Endothelial cell of umbilical vein (primary cell): ENCODE measurements at regions of chr6 and their contacts with region 1.

Region 1: GRCh38 chr6:26285143-26286134 is 79.6 kb upstream of the BTN3A2 start:
- DNase-seq: peak; percentile 98
- H3K4me3 ChIP-seq: peak overlapping the region; percentile 5 to 68 (median 58)
- H3K27ac ChIP-seq: peak overlapping the region; percentile 68
- H3K4me1 ChIP-seq: no peaks in the 10 kb centered on the region
- H3K27me3 ChIP-seq: no peaks in the 10 kb centered on the region
- CTCF ChIP-seq: no peak
- POLR2A ChIP-seq: peak; percentile 99

Region 2: DNA sequence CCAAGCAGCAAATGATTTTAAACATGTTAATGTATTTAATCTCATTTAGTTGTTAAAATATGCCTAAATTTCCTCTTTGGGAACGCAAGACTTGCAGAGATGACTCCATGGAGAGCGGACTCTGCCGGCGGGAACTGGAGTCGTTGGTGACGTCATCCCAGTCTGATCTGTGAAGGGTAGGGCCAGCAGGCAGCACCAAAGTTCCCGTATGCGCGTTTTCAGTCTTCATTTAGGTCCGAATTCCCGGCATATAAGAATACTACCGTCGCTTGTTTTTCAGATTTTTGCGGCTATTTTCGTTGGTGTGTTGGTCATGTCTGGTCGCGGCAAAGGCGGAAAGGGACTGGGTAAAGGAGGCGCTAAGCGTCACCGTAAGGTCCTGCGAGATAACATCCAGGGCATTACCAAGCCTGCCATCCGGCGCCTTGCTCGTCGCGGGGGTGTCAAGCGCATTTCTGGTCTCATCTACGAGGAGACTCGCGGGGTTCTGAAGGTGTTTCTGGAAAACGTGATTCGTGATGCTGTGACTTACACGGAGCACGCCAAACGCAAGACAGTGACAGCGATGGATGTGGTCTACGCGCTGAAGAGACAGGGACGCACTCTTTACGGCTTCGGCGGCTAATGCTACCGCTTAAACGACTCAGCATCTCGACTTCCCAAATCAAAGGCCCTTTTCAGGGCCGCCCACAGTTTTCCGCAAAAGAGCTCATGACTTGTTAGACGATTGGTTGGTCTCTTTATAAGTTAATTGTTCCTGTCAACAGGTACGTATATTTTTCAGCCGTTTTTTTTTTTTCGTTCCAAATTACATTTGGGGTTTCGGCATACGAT is 80.9 kb before region 1 on chr6:
- CTCF ChIA-PET with region 1: no interaction called
- POLR2A ChIA-PET with region 1: no interaction called
- dilution Hi-C with region 1: no loop called
- intact Hi-C with region 1: loop called (anchors 1 kb)
- DNase-seq: peak; percentile 99
- H3K4me3 ChIP-seq: peak overlapping the region; percentile 37 to 93 (median 86)
- H3K27ac ChIP-seq: peak overlapping the region; percentile 96
- H3K4me1 ChIP-seq: peaks cover 28% of the 10 kb centered on the region
- H3K27me3 ChIP-seq: no peaks in the 10 kb centered on the region
- CTCF ChIP-seq: peak; percentile 18 to 31
- POLR2A ChIP-seq: peak; percentile 99

Region 3: DNA sequence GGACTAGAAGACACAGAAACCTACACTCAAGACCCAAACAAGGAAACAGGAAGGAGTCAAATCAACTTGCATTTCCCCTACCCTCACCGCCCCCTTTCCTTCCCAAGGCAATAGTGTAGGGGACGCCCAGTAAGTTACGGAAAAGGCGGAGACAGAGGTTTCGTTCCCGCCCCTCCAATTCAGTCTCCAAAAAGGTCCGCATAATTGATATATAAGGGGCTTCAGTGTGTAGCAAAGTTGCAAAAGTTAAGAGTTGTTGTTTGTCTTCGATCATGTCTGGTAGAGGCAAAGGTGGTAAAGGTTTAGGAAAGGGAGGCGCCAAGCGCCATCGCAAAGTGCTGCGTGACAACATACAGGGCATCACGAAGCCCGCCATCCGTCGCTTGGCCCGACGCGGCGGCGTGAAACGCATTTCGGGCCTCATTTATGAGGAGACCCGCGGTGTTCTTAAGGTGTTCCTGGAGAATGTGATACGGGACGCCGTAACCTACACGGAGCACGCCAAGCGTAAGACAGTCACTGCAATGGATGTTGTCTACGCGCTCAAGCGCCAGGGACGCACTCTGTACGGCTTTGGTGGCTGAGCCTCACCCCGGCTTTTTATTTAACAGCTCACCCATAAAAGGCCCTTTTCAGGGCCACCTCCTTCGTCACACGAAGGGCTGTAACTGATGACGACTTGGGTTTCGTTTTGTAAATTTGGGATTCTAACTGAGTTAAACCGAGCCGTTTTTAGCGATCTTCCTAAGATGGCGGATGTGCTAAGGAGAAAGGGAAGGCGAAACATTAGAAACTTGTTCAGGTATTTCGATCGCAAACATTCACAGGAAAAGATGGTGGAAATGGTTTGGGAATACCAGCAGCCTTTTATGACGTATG is 45.0 kb before region 1 on chr6:
- CTCF ChIA-PET with region 1: no interaction called
- POLR2A ChIA-PET with region 1: no interaction called
- dilution Hi-C with region 1: no loop called
- intact Hi-C with region 1: loop called (anchors 2 kb)
- DNase-seq: peak; percentile 85
- H3K4me3 ChIP-seq: peak overlapping the region; percentile 40 to 77 (median 66)
- H3K27ac ChIP-seq: peak overlapping the region; percentile 79
- H3K4me1 ChIP-seq: peaks cover 3% of the 10 kb centered on the region
- H3K27me3 ChIP-seq: no peaks in the 10 kb centered on the region
- CTCF ChIP-seq: no peak
- POLR2A ChIP-seq: peak; percentile 98

Region 4: DNA sequence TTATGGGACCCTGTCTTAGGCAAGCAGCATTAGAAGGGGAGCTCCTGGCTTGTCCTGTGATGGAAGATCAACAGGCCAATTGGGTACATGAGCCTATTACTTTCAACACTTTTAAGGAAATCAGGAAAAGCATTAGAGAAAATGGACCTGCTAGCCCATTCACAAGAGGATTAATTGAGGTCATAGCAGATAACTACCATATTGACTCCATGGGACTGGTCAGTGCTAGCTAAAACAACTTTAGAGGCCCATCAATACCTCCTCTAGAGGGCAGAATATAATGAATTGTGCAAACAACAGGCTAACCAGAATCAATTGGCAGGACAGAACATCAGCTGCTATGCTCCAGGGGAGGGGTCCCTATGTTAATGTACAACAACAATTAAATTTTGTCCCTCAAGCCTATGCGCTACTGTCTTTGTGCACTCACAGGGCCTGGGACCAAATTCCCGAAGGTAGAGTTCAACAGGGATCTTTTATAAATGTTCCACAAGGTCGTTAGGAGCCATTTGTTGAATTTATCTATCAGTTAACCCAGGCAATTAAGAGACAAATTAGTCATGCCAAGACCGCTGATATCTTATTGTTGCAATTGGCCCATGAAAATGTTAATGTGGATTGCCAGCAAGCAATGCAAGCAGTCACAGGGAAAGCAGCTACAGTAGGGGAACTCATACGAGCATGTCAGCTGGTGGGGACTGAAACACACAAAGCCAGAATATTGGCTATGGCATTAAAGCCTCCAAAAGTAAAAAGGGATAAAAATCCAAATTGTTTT is 27.1 kb before region 1 on chr6:
- CTCF ChIA-PET with region 1: no interaction called
- POLR2A ChIA-PET with region 1: no interaction called
- dilution Hi-C with region 1: no loop called
- intact Hi-C with region 1: no loop called
- DNase-seq: no peak
- H3K4me3 ChIP-seq: no peak overlapping the region
- H3K27ac ChIP-seq: no peak overlapping the region
- H3K4me1 ChIP-seq: no peaks in the 10 kb centered on the region
- H3K27me3 ChIP-seq: peaks cover 12 to 13% of the 10 kb centered on the region in 2 experiments
- CTCF ChIP-seq: peak; percentile 13 to 17
- POLR2A ChIP-seq: no peak

Region 5: GRCh38 chr6:26295691-26296555 is 10.5 kb after region 1 on chr6:
- CTCF ChIA-PET with region 1: no interaction called
- POLR2A ChIA-PET with region 1: no interaction called
- dilution Hi-C with region 1: no loop called
- intact Hi-C with region 1: loop called (anchors 1 kb)
- DNase-seq: peak; percentile 72
- H3K4me3 ChIP-seq: no peak overlapping the region
- H3K27ac ChIP-seq: peak overlapping the region; percentile 73
- H3K4me1 ChIP-seq: peaks cover 8% of the 10 kb centered on the region
- H3K27me3 ChIP-seq: peaks cover 3 to 28% of the 10 kb centered on the region in 2 experiments
- CTCF ChIP-seq: no peak
- POLR2A ChIP-seq: no peak

Region 6: DNA sequence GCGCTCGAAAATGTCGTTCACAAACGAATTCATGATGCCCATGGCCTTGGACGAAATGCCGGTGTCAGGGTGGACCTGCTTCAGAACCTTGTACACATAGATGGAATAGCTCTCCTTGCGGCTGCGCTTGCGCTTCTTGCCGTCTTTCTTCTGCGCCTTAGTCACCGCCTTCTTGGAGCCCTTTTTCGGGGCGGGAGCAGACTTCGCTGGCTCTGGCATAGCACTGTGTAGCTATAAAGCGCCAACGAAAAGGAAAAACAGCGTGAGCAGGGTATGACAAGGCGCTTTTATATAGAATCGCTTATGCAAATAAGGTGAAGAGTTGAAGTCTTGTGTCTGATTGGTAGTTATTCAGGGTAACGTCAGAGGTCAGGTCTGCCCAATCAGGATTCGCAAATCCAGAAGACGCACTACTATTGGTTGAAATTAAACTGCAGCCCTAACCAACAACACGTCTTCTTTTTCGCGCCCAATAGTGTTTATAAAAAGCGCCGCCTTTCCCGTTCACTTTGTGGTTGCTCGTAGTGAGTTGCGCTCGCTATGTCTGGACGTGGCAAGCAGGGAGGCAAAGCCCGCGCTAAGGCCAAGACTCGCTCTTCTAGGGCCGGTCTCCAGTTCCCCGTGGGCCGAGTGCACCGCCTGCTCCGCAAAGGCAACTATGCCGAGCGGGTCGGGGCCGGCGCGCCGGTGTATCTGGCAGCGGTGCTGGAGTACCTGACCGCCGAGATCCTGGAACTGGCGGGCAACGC is 847.3 kb after region 1 on chr6:
- CTCF ChIA-PET with region 1: no interaction called
- POLR2A ChIA-PET with region 1: no interaction called
- dilution Hi-C with region 1: no loop called
- intact Hi-C with region 1: loop called (anchors 5 kb)
- DNase-seq: peak; percentile 100
- H3K4me3 ChIP-seq: peak overlapping the region; percentile 37 to 81 (median 59)
- H3K27ac ChIP-seq: peak overlapping the region; percentile 86
- H3K4me1 ChIP-seq: peaks cover 19% of the 10 kb centered on the region
- H3K27me3 ChIP-seq: no peaks in the 10 kb centered on the region
- CTCF ChIP-seq: no peak
- POLR2A ChIP-seq: peak; percentile 76